ENCODE measurements at regions of chr6 and their contacts with region 1.

Region 1: GRCh38 chr6:73585566-73586415 is 65.0 kb upstream of the EEF1A1 start:
- DNase-seq: peak; percentile 67
- ATAC-seq: peak; percentile 77
- H3K4me3 Mint-ChIP-seq: peak overlapping the region; percentile 74
- H3K27ac Mint-ChIP-seq: peak overlapping the region; percentile 99
- H3K4me1 Mint-ChIP-seq: peaks cover 28% of the 10 kb centered on the region
- H3K27me3 Mint-ChIP-seq: no peaks in the 10 kb centered on the region

Region 2: DNA sequence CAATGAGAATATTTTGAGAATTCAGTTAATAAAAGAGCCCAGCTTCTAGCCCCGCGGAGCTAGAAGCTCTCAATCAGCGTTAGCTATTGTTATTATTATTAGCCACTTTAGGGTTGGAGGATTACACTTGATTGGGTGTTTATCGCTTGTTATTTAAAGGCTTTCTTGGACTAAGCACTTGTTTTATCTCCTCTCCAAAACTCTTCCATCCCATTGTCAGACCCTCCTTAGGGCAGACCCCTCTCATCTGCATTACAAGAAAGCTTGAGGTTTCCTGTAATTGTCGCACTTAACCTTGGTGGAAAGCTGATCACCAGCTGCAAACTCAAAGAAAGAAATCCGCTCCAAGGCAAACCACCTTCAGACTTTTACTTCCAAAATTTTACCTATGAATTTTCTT is 236.5 kb before region 1 on chr6:
- CTCF ChIA-PET with region 1: no interaction called
- DNase-seq: no peak
- ATAC-seq: no peak
- H3K4me3 Mint-ChIP-seq: no peak overlapping the region
- H3K27ac Mint-ChIP-seq: no peak overlapping the region
- H3K4me1 Mint-ChIP-seq: no peaks in the 10 kb centered on the region
- H3K27me3 Mint-ChIP-seq: peaks cover 49% of the 10 kb centered on the region

Region 3: DNA sequence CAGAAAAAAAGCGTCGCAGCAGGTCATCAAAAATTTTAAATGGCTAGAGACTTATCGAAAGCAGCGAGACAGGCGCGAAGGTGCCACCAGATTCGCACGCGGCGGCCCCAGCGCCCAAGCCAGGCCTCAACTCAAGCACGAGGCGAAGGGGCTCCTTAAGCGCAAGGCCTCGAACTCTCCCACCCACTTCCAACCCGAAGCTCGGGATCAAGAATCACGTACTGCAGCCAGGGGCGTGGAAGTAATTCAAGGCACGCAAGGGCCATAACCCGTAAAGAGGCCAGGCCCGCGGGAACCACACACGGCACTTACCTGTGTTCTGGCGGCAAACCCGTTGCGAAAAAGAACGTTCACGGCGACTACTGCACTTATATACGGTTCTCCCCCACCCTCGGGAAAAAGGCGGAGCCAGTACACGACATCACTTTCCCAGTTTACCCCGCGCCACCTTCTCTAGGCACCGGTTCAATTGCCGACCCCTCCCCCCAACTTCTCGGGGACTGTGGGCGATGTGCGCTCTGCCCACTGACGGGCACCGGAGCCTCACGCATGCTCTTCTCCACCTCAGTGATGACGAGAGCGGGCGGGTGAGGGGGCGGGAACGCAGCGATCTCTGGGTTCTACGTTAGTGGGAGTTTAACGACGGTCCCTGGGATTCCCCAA is 65.0 kb before region 1 on chr6 and contains the start of gene EEF1A1:
- CTCF ChIA-PET with region 1: interaction called, 18 read pairs
- DNase-seq: peak; percentile 100
- ATAC-seq: peak; percentile 69
- H3K4me3 Mint-ChIP-seq: peak within 1 kb of the TSS; percentile 96
- H3K27ac Mint-ChIP-seq: peak within 1 kb of the TSS; percentile 99
- H3K4me1 Mint-ChIP-seq: peaks cover 47% of the 10 kb centered on the region
- H3K27me3 Mint-ChIP-seq: no peaks in the 10 kb centered on the region
- total RNA-seq, gene EEF1A1: 5,026 to 6,984 TPM